GM12878 (cell line): ENCODE measurements at regions of chr2 and their contacts with region 1.

Region 1: GRCh38 chr2:38602732-38603401 is at the start of gene HNRNPLL:
- DNase-seq: no peak
- ATAC-seq: peak; percentile 86
- H3K4me3 ChIP-seq: peak within 1 kb of the TSS; percentile 74
- H3K27ac ChIP-seq: peak within 1 kb of the TSS; percentile 51
- H3K4me1 ChIP-seq: peaks cover 15% of the 10 kb centered on the region
- H3K27me3 ChIP-seq: no peaks in the 10 kb centered on the region; a peak in 2 of 4 replicates
- CTCF ChIP-seq: no peak
- EP300 ChIP-seq: no peak; a peak in 1 of 4 replicates
- POLR2A ChIP-seq: peak; percentile 73
- RAD21 ChIP-seq: no peak
- polyA plus RNA-seq, gene HNRNPLL: 0.98 to 1.5 TPM

Region 2: GRCh38 chr2:38362232-38362631 is 240.6 kb before region 1 on chr2:
- CTCF ChIA-PET with region 1: no interaction called
- POLR2A ChIA-PET with region 1: no interaction called
- RAD21 ChIA-PET with region 1: no interaction called
- SMC1A ChIA-PET with region 1: no interaction called
- in situ Hi-C with region 1: no loop called
- intact Hi-C with region 1: no loop called
- DNase-seq: no peak
- ATAC-seq: peak; percentile 30
- H3K4me3 ChIP-seq: no peak overlapping the region
- H3K27ac ChIP-seq: no peak overlapping the region
- H3K4me1 ChIP-seq: no peaks in the 10 kb centered on the region; the same call in 1 of the 2 replicates
- H3K27me3 ChIP-seq: no peaks in the 10 kb centered on the region
- CTCF ChIP-seq: no peak
- EP300 ChIP-seq: no peak
- POLR2A ChIP-seq: no peak
- RAD21 ChIP-seq: no peak

Region 3: GRCh38 chr2:38619458-38620164 is 16.7 kb after region 1 on chr2:
- CTCF ChIA-PET with region 1: interaction called, 15 read pairs
- POLR2A ChIA-PET with region 1: interaction called, 5 read pairs
- RAD21 ChIA-PET with region 1: interaction called, 12 read pairs
- SMC1A ChIA-PET with region 1: interaction called, 10 read pairs
- in situ Hi-C with region 1: no loop called
- intact Hi-C with region 1: no loop called
- DNase-seq: no peak
- ATAC-seq: peak; percentile 68
- H3K4me3 ChIP-seq: no peak overlapping the region
- H3K27ac ChIP-seq: no peak overlapping the region
- H3K4me1 ChIP-seq: peaks cover 9% of the 10 kb centered on the region; the same call in 1 of the 2 replicates
- H3K27me3 ChIP-seq: 0 out of 4 replicates have a peak, but pooled peaks cover 0 to 1% of the 10 kb centered on the region in 2 experiments
- CTCF ChIP-seq: no peak
- EP300 ChIP-seq: peak in 1 of 2 experiments; percentile 48; a peak in 1 of 4 replicates
- POLR2A ChIP-seq: no peak
- RAD21 ChIP-seq: no peak

Region 4: DNA sequence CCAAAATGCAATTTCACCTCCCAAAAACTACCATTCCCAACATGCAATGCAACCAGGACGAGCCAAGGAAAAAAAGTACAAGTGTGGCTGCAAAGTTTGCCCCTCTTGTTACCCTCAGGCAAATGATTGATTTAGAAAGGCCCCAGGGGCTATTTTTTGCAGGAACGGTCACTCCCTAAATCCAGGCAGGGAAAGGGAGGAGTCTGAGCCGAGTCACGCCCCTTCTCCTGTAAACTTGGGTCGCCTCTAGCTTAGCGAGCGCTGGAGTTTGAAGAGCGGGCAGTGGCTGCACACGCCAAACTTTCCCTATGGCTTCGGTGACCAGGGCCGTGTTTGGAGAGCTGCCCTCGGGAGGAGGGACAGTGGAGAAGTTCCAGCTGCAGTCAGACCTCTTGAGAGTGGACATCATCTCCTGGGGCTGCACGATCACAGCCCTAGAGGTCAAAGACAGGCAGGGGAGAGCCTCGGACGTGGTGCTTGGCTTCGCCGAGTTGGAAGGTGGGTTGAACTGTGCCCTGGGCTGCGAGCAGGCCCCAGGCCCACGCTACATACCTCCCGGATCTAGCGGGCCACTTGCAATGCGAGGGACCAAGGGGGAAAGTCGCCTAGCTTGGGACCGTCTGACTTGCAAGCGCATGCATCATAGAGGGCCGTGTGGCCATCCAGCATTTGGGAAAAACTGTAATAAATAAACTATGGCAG is 63.1 kb after region 1 on chr2 and contains the start of gene GALM:
- CTCF ChIA-PET with region 1: interaction called, 30 read pairs
- POLR2A ChIA-PET with region 1: interaction called, 5 read pairs
- RAD21 ChIA-PET with region 1: interaction called, 8 read pairs
- SMC1A ChIA-PET with region 1: interaction called, 7 read pairs
- in situ Hi-C with region 1: no loop called
- intact Hi-C with region 1: no loop called
- DNase-seq: no peak
- ATAC-seq: peak; percentile 55
- H3K4me3 ChIP-seq: peak within 1 kb of the TSS; percentile 56; the same call in 1 of the 2 replicates
- H3K27ac ChIP-seq: peak within 1 kb of the TSS; percentile 33; the same call in 1 of the 2 replicates
- H3K4me1 ChIP-seq: peaks cover 28% of the 10 kb centered on the region
- H3K27me3 ChIP-seq: no peaks in the 10 kb centered on the region
- CTCF ChIP-seq: no peak
- EP300 ChIP-seq: no peak
- POLR2A ChIP-seq: no peak
- RAD21 ChIP-seq: no peak
- polyA plus RNA-seq, gene GALM: 1.5 to 1.7 TPM

Region 5: DNA sequence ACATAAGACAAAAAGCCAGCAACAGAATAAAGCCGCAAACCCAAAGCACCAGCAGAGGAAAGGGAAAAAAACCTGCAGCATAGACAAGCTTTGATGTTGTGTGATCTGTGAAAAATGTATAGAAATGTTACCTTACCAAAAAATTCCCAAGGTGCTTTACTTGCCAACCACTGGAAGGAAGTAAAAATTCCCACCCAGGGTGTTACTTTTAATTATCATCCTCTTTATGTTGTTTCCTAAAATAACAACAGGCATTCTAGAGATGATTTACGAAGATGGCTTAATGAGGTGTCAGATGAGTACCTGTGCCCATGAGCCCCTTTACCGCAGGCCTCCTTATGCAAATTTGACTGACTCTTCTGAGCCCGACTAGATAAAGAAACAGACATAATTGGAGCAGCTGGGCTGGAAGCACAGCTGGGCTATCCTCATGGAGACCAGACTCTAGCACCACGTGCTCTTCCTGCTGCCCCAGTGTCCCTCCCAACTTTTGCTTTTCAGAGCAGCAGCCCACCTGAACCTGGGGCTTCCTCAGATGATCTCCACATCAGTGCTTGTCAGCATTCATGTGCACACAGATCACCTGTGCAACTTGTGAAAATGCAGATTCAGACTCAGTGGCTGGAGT is 106.8 kb after region 1 on chr2:
- CTCF ChIA-PET with region 1: interaction called, 13 read pairs
- POLR2A ChIA-PET with region 1: interaction called, 3 read pairs
- RAD21 ChIA-PET with region 1: interaction called, 7 read pairs
- SMC1A ChIA-PET with region 1: interaction called, 13 read pairs
- in situ Hi-C with region 1: no loop called
- intact Hi-C with region 1: no loop called
- DNase-seq: peak; percentile 35
- ATAC-seq: peak; percentile 87
- H3K4me3 ChIP-seq: no peak overlapping the region
- H3K27ac ChIP-seq: no peak overlapping the region
- H3K4me1 ChIP-seq: peaks cover 16% of the 10 kb centered on the region
- H3K27me3 ChIP-seq: no peaks in the 10 kb centered on the region
- CTCF ChIP-seq: no peak
- EP300 ChIP-seq: peak in 1 of 2 experiments; percentile 47; a peak in 2 of 4 replicates
- POLR2A ChIP-seq: no peak
- RAD21 ChIP-seq: no peak

Region 6: GRCh38 chr2:38740851-38741731 is 138.2 kb after region 1 on chr2:
- CTCF ChIA-PET with region 1: interaction called, 16 read pairs
- POLR2A ChIA-PET with region 1: interaction called, 4 read pairs
- RAD21 ChIA-PET with region 1: interaction called, 6 read pairs
- SMC1A ChIA-PET with region 1: interaction called, 10 read pairs
- in situ Hi-C with region 1: no loop called
- intact Hi-C with region 1: no loop called
- DNase-seq: no peak
- ATAC-seq: peak; percentile 10
- H3K4me3 ChIP-seq: no peak overlapping the region
- H3K27ac ChIP-seq: no peak overlapping the region
- H3K4me1 ChIP-seq: no peaks in the 10 kb centered on the region
- H3K27me3 ChIP-seq: no peaks in the 10 kb centered on the region
- CTCF ChIP-seq: peak in 2 of 3 experiments; percentile 40 to 41; a peak in 4 of 6 replicates
- EP300 ChIP-seq: no peak
- POLR2A ChIP-seq: no peak; the same call in 1 of the 2 replicates
- RAD21 ChIP-seq: peak; percentile 41